Breast epithelium (tissue), 4 donors: ENCODE measurements at regions of chr7 and their contacts with region 1.

Region 1: DNA sequence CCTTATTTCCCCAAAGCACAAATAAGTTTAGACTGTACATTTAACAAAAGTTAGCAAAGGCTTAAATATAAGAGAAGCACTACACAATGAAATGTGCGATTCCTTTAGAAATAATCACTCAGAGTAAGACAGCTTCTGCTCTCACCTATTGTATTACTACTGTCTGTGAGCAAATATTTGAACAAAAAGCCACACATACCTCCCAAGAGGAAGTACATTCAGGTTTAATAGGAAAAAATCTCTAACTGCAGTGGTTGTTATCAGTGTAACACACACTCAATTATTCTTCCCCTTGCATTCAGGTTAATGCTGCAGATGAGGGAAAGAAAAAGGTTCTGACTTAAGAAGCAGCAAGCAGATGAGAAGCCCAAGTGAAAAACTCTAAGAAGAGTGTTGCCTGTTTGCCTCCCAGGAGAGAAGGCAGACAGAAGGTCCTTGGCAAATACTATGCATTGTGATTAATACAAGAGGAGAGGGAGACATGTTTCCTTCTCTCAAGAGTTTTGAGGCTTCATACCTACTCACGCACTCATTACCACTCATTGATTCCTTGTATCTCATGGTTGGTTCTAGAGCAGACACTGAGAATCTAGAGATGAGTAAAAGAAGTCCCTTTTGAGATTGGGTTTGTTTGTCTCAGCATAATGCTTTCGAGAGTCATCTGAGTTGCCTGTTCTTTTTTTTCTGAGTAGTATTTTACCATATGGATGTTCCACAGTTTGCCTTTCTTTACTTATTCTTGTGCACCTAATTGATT is 13.6 kb downstream of the GIMAP4 start:
- DNase-seq: no peak
- H3K4me3 ChIP-seq: no peak overlapping the region
- H3K27ac ChIP-seq: no peak overlapping the region
- H3K4me1 ChIP-seq: no peaks in the 10 kb centered on the region
- H3K27me3 ChIP-seq: no peaks in the 10 kb centered on the region
- CTCF ChIP-seq: no peak
- POLR2A ChIP-seq: no peak

Region 2: GRCh38 chr7:149790146-149790548 is 790.7 kb before region 1 on chr7:
- intact Hi-C with region 1: loop called (anchors 5 kb)
- DNase-seq: peak in 1 of 2 donors; percentile 61
- H3K4me3 ChIP-seq: peak overlapping the region in 2 of 3 donors; percentile 18 to 52
- H3K27ac ChIP-seq: no peak overlapping the region
- H3K4me1 ChIP-seq: no peaks in the 10 kb centered on the region
- H3K27me3 ChIP-seq: peaks cover 2 to 33% of the 10 kb centered on the region in 2 donors
- CTCF ChIP-seq: peak in 2 of 3 donors; percentile 21 to 51
- POLR2A ChIP-seq: no peak